GM13977 (cell line): ENCODE measurements at regions of chr5 and their contacts with region 1.

Region 1: GRCh38 chr5:93620487-93621326 is 37.7 kb downstream of the NR2F1 start:
- DNase-seq: peak; percentile 80
- CTCF ChIP-seq: peak; percentile 44

Region 2: DNA sequence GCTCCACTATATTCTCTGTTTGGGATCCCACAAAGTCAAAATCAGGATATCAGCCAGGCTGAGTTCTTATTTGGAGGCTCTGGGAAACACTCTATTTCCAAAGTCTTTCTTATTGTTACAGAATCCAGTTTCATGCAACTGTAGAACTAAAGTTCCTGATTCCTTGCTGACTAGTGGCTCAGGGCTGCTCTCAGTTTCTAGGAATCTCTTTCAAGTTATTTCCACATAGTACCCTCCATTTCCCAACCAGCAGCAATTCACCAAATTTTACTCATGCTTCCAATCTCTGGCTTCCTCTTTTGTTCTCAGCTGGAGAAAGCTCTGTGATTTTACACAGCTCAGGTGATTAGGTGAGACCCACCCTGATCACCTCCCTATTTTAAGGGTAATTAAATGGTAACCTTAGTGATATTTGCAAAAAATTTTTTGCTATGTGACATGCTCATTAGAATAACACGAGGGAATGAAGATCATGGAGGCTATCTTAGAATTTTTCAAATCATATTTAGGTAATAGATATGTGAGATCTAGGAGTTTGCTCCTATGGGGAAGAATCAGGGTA is 1442.7 kb before region 1 on chr5:
- in situ Hi-C with region 1: no loop called
- DNase-seq: no peak
- CTCF ChIP-seq: no peak

Region 3: GRCh38 chr5:93789173-93790070 is 168.7 kb after region 1 on chr5:
- in situ Hi-C with region 1: loop called (anchors 25 kb)
- DNase-seq: no peak
- CTCF ChIP-seq: no peak

Region 4: GRCh38 chr5:93915142-93915553 is 294.4 kb after region 1 on chr5:
- in situ Hi-C with region 1: loop called (anchors 25 kb)
- DNase-seq: peak; percentile 20
- CTCF ChIP-seq: peak; percentile 43